ENCODE measurements at regions of chrX and their contacts with region 1.

Region 1: DNA sequence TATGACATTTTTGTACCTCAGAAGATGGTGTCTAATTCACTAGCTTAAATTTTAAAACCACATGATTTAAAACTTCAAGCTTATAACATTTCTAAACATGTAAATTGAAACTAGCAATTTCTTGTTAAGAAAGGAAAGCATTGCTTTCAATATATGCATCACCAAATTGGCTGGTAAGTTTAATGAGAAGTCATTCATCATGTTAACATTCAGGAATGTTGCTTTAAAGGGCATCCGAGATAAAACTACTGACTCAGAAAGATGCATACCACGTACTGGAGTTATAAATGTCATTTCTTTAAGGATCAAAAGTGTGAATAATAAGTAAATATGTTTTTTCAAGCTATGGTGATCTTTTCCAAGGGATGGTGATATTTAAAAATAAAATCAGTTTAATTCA is 83.3 kb upstream of the VCX2 start:
- DNase-seq: no peak
- ATAC-seq: no peak
- H3K4me3 ChIP-seq: no peak overlapping the region
- H3K27ac ChIP-seq: no peak overlapping the region
- H3K4me1 ChIP-seq: no peaks in the 10 kb centered on the region
- H3K27me3 ChIP-seq: no peaks in the 10 kb centered on the region
- CTCF ChIP-seq: no peak
- EP300 ChIP-seq: no peak
- POLR2A ChIP-seq: no peak
- RAD21 ChIP-seq: no peak

Region 2: DNA sequence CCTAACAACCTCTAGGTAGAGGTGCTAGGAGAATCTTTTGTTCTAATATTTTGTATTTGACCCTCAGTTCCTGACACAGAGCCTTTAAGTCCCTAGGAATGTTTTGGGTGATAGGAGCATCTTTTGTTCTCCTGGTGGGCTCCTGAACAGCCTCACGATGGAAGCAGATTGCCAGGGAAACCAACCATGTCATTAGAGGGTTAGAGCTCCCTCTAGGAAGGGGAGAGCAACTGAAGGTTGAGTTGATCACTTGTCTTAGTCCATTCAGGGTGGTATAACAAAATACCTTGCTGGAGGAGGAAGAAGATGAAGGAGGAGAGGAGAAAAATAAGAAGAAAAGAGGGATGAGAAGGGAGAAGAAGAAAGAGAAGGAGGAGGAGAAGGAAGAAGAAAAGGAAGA is 402.2 kb before region 1 on chrX:
- CTCF ChIA-PET with region 1: no interaction called
- POLR2A ChIA-PET with region 1: no interaction called
- in situ Hi-C with region 1: no loop called
- intact Hi-C with region 1: no loop called
- DNase-seq: no peak
- ATAC-seq: no peak
- H3K4me3 ChIP-seq: no peak overlapping the region
- H3K27ac ChIP-seq: no peak overlapping the region
- H3K4me1 ChIP-seq: no peaks in the 10 kb centered on the region
- H3K27me3 ChIP-seq: no peaks in the 10 kb centered on the region
- CTCF ChIP-seq: 0 out of 2 replicates have a peak, but pooled peaks have one; percentile 16
- EP300 ChIP-seq: no peak
- POLR2A ChIP-seq: no peak
- RAD21 ChIP-seq: no peak

Region 3: DNA sequence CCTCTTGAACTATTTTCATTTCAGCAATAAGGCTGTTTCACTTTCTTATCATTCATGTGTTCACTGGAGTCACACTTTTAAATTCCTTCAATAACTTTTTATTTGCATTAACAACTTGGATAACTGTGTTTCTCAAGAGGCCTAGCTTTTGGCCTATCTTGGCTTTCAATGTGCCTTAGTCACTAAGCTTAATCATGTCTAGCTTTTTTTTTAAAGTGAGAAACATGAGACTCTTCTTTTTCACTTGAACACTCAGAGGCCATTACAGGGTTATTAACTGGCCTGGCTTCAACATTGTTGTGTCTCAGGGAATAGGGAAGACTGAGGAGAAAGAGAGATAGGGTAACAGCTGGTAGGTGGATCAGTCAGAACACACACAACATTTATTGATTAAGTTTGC is 19.4 kb before region 1 on chrX:
- CTCF ChIA-PET with region 1: no interaction called
- POLR2A ChIA-PET with region 1: no interaction called
- in situ Hi-C with region 1: no loop called
- intact Hi-C with region 1: loop called (anchors 1 kb)
- DNase-seq: no peak
- ATAC-seq: no peak
- H3K4me3 ChIP-seq: no peak overlapping the region
- H3K27ac ChIP-seq: no peak overlapping the region
- H3K4me1 ChIP-seq: no peaks in the 10 kb centered on the region
- H3K27me3 ChIP-seq: no peaks in the 10 kb centered on the region
- CTCF ChIP-seq: no peak
- EP300 ChIP-seq: no peak
- POLR2A ChIP-seq: no peak
- RAD21 ChIP-seq: no peak

Region 4: DNA sequence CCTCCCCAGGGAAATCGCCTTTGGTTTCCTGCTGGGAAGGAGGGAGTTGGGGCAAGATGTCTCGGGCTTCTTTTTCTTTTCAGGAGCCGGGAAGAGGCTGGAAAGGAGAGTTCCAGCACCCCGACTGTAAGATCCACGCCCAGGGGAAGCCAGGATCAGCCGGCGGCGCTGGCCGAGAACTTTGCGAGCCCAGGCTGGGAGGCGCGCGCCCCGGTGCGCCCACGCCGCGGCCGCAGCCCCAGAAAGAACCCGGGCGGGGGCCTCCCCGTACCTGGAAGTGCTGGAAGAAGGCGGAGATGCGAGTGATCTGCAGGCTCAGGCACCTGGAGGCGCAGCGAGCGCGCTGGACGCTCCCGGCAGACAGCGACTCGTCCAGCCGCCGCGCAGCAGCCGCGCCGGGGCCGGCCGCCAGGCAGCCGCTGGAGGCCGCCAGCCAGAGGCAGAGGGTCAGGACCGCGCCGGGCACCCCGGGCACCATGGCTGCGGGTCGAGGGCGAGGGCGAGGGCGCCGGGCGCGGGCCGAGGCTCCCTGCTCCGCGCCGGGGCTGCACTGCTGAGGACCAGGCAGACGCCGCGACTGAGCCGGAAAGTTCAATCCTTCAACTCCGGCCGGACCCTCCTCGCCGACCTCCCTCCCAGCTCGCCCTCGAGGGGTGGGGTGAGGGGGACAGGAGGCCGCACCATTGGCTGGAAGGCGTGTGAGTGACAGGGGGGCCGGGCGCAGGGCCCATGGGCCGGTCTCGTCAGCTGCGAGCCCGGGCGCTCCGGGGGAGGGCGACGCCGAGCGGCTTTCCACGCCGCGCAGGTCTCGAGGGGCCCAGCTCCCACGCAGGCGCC is 477.4 kb after region 1 on chrX and contains the start of gene ANOS1:
- CTCF ChIA-PET with region 1: no interaction called
- POLR2A ChIA-PET with region 1: no interaction called
- in situ Hi-C with region 1: no loop called
- intact Hi-C with region 1: no loop called
- DNase-seq: no peak
- ATAC-seq: peak; percentile 91
- H3K4me3 ChIP-seq: peak within 1 kb of the TSS in 2 of 3 experiments; percentile 31 to 46; a peak in 4 of 6 replicates
- H3K27ac ChIP-seq: no peak within 1 kb of the TSS
- H3K4me1 ChIP-seq: no peaks in the 10 kb centered on the region
- H3K27me3 ChIP-seq: peaks cover 0 to 9% of the 10 kb centered on the region in 2 experiments; a peak in 1 of 5 replicates
- CTCF ChIP-seq: no peak
- EP300 ChIP-seq: no peak
- POLR2A ChIP-seq: no peak
- RAD21 ChIP-seq: no peak
- total RNA-seq, gene ANOS1: not detected in 2 replicates

Measured in HepG2 (cell line).